Activated CD4-positive, alpha-beta T cell treated with anti-CD3 and anti-CD28 coated beads, Interleukin-2, amount 10 ng/mL, durations not matched to agents 7 days and 5 days (primary cell): ENCODE measurements at regions of chr15 and their contacts with region 1.

Region 1: GRCh38 chr15:40440743-40441564 is at the start of gene BAHD1:
- DNase-seq: peak; percentile 96
- H3K4me3 Mint-ChIP-seq: peak within 1 kb of the TSS; percentile 88
- H3K27ac Mint-ChIP-seq: peak within 1 kb of the TSS; percentile 83
- H3K4me1 Mint-ChIP-seq: peaks cover 50% of the 10 kb centered on the region
- H3K27me3 Mint-ChIP-seq: peaks cover 46% of the 10 kb centered on the region
- total RNA-seq, gene BAHD1: 28.7 to 30.8 TPM

Region 2: GRCh38 chr15:40160689-40161688 is 280.0 kb before region 1 on chr15 and contains the start of gene BUB1B:
- CTCF ChIA-PET with region 1: no interaction called
- POLR2A ChIA-PET with region 1: no interaction called
- DNase-seq: peak; percentile 97
- H3K4me3 Mint-ChIP-seq: no peak within 1 kb of the TSS
- H3K27ac Mint-ChIP-seq: no peak within 1 kb of the TSS
- H3K4me1 Mint-ChIP-seq: peaks cover 17% of the 10 kb centered on the region
- H3K27me3 Mint-ChIP-seq: no peaks in the 10 kb centered on the region
- total RNA-seq, gene BUB1B: 81.1 to 89.0 TPM

Region 3: DNA sequence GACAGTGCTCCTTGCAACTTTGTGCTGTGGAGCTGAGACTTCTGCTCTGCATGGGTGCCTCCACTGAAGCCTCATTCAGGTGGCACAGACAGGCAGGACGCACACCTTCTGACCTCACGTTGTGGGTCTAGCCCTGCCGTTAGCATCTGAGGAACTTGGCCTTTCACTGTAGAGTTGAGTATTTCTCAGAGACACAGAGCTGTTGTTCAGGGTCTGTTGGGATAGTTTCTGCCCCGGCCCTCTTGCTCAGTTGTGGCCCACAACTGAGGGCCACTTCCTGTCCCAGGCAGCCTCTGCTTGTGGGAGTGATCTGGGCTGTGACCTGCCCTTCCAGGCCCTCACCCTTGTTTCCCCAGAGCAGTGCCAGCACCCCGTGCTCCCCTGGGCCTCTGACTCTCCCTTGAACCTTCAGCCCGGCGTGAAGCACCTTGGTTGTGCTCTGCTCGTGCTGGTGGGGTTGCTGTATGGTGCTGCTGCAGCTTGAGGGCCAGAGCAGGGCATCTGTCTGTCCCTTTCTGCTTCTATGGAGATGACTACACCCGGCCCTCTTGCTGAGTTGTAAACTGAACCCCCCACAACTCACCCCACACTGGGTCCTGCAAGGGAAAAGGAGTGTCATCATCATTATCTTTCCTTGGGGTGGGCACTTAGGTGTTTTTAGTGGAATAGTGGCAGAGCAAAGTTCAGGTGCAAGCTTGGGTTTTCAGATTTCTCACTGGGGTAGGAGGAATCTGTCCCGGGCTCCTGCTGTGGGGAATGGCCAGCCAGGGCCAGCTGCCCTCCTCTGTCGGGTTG is 11.5 kb after region 1 on chr15:
- CTCF ChIA-PET with region 1: interaction called, 28 read pairs
- POLR2A ChIA-PET with region 1: interaction called, 3 read pairs
- DNase-seq: peak; percentile 30
- H3K4me3 Mint-ChIP-seq: peak overlapping the region; percentile 76
- H3K27ac Mint-ChIP-seq: peak overlapping the region; percentile 92
- H3K4me1 Mint-ChIP-seq: peaks cover 77% of the 10 kb centered on the region
- H3K27me3 Mint-ChIP-seq: no peaks in the 10 kb centered on the region